ENCODE measurements at regions of chr5 and their contacts with region 1.

Region 1: DNA sequence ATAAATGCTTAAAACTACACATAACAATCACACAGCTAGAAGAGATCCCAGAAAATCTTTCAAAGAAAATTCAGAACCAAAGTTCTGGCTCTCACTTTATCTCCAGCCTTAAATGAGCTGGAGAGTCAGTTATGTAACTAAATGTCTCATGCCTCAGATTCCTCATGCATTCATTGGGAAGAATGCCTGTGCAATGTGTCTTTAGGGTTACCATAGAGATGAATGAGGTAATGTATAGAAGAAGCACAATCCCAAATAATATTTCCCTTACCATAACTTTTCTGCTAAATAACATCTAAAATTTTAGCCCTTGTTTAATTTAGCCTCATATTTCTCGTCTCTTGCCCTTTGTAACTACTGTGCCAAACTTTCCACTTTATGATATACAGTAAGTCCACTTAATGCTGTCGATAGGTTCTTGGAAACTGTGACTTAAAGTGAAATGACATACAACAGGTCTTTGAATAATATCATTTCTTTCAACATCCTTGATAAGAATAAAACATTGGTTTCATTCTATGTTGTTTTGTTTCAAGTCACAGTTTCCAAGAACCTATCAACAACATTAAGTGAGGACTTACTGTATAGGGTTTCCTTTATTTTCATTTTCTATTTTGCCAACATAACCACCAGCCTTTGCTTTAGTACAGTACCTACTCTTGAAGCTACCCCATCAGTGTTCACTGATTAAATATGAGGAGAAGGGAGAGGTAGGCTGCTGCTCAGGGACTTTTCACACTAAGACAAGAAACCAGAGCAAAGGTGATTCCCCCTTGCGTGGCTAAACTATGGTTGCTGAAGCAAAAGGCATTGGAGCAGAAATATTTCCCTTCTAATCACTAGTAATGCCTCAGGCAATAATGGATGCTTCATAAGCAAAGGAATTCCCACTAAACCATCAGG is 295.7 kb upstream of the PTGER4 start:
- DNase-seq: peak; percentile 80
- H3K4me3 Mint-ChIP-seq: peak overlapping the region; percentile 63
- H3K27ac Mint-ChIP-seq: peak overlapping the region; percentile 86
- H3K4me1 Mint-ChIP-seq: peaks cover 70% of the 10 kb centered on the region
- H3K27me3 Mint-ChIP-seq: no peaks in the 10 kb centered on the region

Region 2: DNA sequence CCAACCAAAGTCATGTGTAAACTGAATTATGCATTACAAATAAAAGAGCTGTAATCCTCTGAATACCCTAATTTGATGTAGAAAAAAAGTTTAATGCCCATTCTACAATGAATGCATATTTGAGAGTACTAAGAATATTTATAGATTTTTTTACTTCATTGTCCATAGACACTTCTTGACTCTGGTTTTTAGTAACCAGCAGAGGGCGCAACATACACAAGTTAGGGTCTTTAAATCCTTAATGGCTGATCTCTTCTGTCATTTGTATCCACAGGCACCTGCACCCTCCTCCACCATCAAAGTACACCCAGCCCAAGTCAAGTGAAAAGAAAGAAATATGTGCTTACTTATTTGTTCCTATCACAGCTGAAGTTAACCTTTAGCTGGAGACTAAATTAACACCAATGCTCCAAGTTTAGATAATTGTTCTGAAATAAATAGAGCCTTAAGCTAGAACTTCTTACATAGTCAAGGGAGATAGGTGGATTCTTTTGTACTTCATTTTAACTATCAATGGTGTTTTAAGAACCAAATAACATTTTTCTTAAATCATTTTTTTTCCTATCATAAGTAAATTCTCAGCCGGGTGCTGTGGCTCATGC is 435.0 kb before region 1 on chr5:
- intact Hi-C with region 1: loop called (anchors 5 kb)
- DNase-seq: peak; percentile 90
- H3K4me3 Mint-ChIP-seq: no peak overlapping the region
- H3K27ac Mint-ChIP-seq: peak overlapping the region; percentile 7
- H3K4me1 Mint-ChIP-seq: peaks cover 3% of the 10 kb centered on the region
- H3K27me3 Mint-ChIP-seq: peaks cover 2% of the 10 kb centered on the region

Region 3: GRCh38 chr5:40404613-40405012 is 20.6 kb after region 1 on chr5:
- intact Hi-C with region 1: loop called (anchors 1 kb)
- DNase-seq: peak; percentile 80
- H3K4me3 Mint-ChIP-seq: peak overlapping the region; percentile 21
- H3K27ac Mint-ChIP-seq: peak overlapping the region; percentile 75
- H3K4me1 Mint-ChIP-seq: peaks cover 71% of the 10 kb centered on the region
- H3K27me3 Mint-ChIP-seq: no peaks in the 10 kb centered on the region

Region 4: GRCh38 chr5:40437452-40437861 is 53.5 kb after region 1 on chr5:
- intact Hi-C with region 1: loop called (anchors 1 kb)
- DNase-seq: peak; percentile 66
- H3K4me3 Mint-ChIP-seq: peak overlapping the region; percentile 16
- H3K27ac Mint-ChIP-seq: peak overlapping the region; percentile 79
- H3K4me1 Mint-ChIP-seq: peaks cover 69% of the 10 kb centered on the region
- H3K27me3 Mint-ChIP-seq: no peaks in the 10 kb centered on the region

Region 5: GRCh38 chr5:40578501-40579451 is 194.8 kb after region 1 on chr5:
- intact Hi-C with region 1: loop called (anchors 1 kb)
- DNase-seq: peak; percentile 76
- H3K4me3 Mint-ChIP-seq: peak overlapping the region; percentile 45
- H3K27ac Mint-ChIP-seq: peak overlapping the region; percentile 93
- H3K4me1 Mint-ChIP-seq: peaks cover 27% of the 10 kb centered on the region
- H3K27me3 Mint-ChIP-seq: no peaks in the 10 kb centered on the region